ENCODE measurements at regions of chr15 and their contacts with region 1.

Region 1: DNA sequence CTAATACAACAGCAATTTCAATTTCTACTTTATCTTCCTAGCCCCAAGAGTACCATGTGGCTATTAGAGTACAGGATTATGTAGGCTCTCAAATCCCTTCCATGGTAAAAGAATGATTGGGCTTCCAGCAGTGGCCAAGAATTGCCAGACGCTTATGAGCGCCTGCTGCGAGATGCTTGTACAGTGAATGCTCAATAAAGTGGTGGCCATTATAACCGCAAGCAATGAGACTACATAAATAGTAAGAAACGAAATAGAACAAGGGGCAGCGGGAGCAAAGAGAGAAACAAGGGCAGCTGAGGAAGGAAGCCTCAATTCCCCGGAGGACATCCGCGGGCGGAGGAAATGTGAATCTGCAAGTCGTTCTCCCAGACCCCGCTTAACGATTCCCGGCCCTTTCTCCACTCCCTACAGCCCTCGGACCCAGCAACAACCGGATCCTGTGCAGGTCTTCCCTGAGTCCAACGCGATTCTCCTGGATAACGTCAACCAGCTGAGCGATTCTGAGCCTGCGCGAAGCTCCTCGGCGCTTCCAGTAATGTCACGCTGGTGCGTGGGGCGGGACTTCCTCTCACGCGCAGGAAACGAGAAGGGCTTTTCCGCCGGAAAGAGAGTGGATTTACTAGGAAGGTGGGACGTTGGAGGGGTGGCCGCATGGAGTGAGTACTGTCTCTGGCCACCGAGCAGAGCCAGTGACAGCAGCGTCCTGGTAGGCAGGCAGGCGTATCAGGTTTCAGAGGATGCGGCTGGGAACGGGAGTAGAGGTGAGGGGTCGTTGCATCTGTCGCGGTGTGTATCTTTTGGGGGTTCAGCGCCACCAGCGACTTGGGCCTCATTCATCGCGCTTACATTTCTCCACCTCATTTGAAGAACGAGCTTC is 40.5 kb upstream of the AP3B2 start:
- DNase-seq: peak; percentile 93
- H3K4me3 ChIP-seq: peak overlapping the region; percentile 67 to 99 (median 74)
- H3K27ac ChIP-seq: peak overlapping the region; percentile 64
- H3K4me1 ChIP-seq: peaks cover 15% of the 10 kb centered on the region
- H3K27me3 ChIP-seq: no peaks in the 10 kb centered on the region
- CTCF ChIP-seq: no peak

Region 2: DNA sequence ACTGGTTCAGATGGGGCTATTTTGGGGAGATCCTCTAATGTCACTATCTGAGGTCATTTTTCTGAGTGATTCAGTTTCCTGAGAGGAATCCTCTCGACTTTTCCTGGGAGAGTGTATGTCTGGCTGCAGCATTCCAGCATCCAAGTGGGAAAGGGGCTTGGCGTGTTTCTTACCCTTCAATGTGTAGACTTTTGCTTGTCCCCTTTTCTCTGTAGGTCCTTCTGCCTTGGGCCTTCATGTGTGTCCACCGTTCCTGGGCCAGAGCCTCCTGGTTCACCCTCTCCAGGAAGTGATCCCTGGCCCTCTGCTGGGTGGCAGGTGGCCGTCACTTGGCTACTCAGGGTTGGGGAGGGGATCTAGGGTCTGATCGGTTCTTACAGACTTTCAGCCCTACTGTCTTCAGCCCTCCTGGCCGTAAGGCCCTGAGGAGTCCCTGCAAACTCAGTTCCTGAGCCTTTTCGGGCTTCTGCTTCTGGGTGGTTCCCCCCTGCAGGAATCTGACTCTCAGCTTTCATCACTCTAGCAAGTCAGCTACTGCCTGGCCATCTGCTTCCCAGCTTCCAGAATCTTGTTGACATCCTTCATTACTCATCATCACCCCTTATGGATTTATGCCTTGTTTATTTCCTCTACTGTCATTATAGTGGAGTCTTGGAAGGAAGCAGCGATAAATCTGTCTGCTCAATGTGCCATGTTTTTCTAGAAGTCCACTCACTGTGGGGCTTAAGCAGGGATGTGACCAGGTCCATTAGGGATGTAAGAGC is 437.4 kb before region 1 on chr15:
- CTCF ChIA-PET with region 1: no interaction called
- dilution Hi-C with region 1: no loop called
- in situ Hi-C with region 1: no loop called
- intact Hi-C with region 1: no loop called
- DNase-seq: no peak
- H3K4me3 ChIP-seq: no peak overlapping the region
- H3K27ac ChIP-seq: no peak overlapping the region
- H3K4me1 ChIP-seq: no peaks in the 10 kb centered on the region
- H3K27me3 ChIP-seq: peaks cover 2% of the 10 kb centered on the region
- CTCF ChIP-seq: no peak

Region 3: DNA sequence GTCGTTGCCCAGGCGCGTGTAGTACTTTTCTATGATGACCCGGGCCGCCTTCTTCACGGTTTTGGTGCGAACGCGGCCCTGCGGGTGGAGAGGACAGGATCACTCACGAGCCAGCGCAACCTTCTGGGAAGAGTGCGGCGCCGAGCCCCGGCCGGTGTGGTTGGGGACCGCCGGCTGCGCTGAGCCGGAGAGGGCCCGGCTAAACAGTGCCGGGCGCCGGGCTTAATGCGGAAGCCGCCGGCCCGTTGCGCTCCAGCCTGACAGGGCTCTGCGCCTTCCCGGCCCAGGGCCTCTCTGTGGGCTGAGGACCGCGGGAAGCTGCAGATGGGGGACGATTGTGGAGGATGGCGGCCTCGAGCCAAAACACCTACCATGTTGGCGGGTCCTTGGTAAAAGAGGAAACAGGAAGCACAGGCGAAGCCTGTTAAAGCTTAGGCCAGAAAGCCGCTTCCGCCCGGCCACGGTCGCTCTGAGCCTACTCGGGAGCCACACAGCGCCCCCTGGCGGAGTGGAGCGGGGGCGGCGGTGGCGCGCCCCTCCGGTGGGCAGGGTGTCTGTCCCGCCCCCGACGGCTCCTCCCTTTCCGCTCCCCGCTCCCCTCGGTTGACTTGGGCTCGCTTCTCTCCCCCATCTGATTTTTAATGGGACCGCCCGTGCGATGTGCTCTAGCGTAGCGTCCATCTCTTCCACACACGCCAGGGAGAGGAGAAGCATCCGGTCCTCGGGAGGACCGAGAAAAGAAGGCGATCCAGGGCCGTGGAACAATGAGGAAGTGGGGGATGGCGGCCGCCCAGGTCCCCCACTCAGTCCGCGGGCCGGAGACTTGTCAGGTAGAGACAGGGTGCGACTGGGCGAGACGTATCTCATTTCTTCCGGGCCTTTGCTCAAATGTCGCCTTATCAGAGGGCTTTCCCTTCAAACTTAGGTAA is 209.9 kb before region 1 on chr15 and contains the start of gene RPS17:
- CTCF ChIA-PET with region 1: no interaction called
- dilution Hi-C with region 1: no loop called
- in situ Hi-C with region 1: no loop called
- intact Hi-C with region 1: loop called (anchors 1 kb)
- DNase-seq: peak; percentile 96
- H3K4me3 ChIP-seq: peak within 1 kb of the TSS; percentile 83 to 92 (median 92)
- H3K27ac ChIP-seq: peak within 1 kb of the TSS; percentile 73
- H3K4me1 ChIP-seq: peaks cover 21% of the 10 kb centered on the region
- H3K27me3 ChIP-seq: no peaks in the 10 kb centered on the region
- CTCF ChIP-seq: peak; percentile 78 to 98
- total RNA-seq, gene RPS17: 1,069 to 1,616 TPM

Region 4: GRCh38 chr15:82709421-82710207 is 40.6 kb before region 1 on chr15 and contains the start of gene AP3B2:
- CTCF ChIA-PET with region 1: interaction called, 3 read pairs
- dilution Hi-C with region 1: no loop called
- in situ Hi-C with region 1: no loop called
- intact Hi-C with region 1: loop called (anchors 1 kb)
- DNase-seq: peak; percentile 69
- H3K4me3 ChIP-seq: peak within 1 kb of the TSS; percentile 88 to 96 (median 89)
- H3K27ac ChIP-seq: no peak within 1 kb of the TSS
- H3K4me1 ChIP-seq: peaks cover 7% of the 10 kb centered on the region
- H3K27me3 ChIP-seq: no peaks in the 10 kb centered on the region
- CTCF ChIP-seq: no peak
- total RNA-seq, gene AP3B2: 5.5 to 12.3 TPM

Region 5: GRCh38 chr15:82730022-82730530 is 20.1 kb before region 1 on chr15:
- CTCF ChIA-PET with region 1: no interaction called
- dilution Hi-C with region 1: no loop called
- in situ Hi-C with region 1: no loop called
- intact Hi-C with region 1: no loop called
- DNase-seq: no peak
- H3K4me3 ChIP-seq: no peak overlapping the region
- H3K27ac ChIP-seq: no peak overlapping the region
- H3K4me1 ChIP-seq: no peaks in the 10 kb centered on the region
- H3K27me3 ChIP-seq: no peaks in the 10 kb centered on the region
- CTCF ChIP-seq: no peak

Region 6: DNA sequence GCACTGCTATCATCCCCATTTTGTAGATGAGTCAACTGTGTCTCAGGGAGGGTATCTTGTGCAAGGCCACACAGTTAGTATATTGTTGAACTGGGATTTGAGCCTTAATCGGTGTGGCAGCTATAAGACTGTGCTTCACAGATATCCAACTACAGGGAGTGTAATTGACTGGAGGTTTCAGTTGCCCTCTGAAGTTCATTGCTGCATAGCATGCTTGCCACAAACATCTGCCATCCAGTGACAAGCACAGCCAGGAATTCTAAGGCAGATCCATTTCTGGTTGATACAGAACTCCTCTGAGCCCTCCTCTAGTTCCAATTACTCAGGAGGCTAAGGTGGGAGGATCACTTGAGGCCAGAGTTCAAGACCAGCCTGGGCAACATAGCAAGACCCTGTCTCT is 39.3 kb after region 1 on chr15:
- CTCF ChIA-PET with region 1: no interaction called
- dilution Hi-C with region 1: no loop called
- in situ Hi-C with region 1: no loop called
- intact Hi-C with region 1: no loop called
- DNase-seq: peak; percentile 12
- H3K4me3 ChIP-seq: no peak overlapping the region
- H3K27ac ChIP-seq: no peak overlapping the region
- H3K4me1 ChIP-seq: peaks cover 16% of the 10 kb centered on the region
- H3K27me3 ChIP-seq: no peaks in the 10 kb centered on the region
- CTCF ChIP-seq: no peak

Region 7: GRCh38 chr15:82832601-82833361 is 82.6 kb after region 1 on chr15:
- CTCF ChIA-PET with region 1: no interaction called
- dilution Hi-C with region 1: no loop called
- in situ Hi-C with region 1: no loop called
- intact Hi-C with region 1: loop called (anchors 5 kb)
- DNase-seq: peak; percentile 94
- H3K4me3 ChIP-seq: no peak overlapping the region
- H3K27ac ChIP-seq: peak overlapping the region; percentile 84
- H3K4me1 ChIP-seq: peaks cover 25% of the 10 kb centered on the region
- H3K27me3 ChIP-seq: no peaks in the 10 kb centered on the region
- CTCF ChIP-seq: peak in 1 of 2 donors; percentile 21

Region 8: DNA sequence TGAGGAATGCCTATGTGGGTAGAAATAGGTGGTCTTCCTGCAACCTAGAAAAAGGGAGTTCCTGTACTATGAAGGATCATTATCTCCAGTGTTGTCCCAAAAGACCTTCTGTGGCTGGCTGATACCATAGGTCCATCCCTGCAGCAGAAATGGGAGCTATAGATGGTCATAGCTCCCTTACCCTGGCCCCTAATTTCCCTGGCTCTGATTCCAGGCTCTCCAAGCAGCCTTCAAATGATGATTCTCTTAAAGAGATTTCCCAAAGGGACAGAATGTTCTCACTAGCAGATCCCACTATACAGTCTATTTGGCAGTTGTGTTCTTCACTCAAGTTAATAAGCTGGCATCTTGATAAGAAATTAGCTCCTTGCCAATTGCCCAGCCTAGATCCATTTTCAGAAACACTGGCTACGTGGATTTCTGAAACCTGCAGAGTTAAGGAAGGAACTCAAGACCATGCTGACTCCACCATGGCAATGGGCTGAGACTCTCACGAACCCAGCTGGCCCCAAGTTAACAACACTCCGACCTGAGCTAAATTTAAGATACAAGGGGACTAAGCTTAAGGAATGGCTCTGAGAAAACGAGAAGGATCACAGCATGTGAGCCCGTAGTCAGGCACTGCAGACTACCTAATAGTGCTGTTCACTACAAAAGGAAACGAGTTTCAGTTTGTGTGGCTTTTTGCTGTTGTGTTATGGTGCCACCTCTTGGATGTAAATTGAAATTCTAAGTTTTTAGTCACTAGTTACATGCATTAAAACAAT is 249.9 kb after region 1 on chr15:
- CTCF ChIA-PET with region 1: no interaction called
- dilution Hi-C with region 1: no loop called
- in situ Hi-C with region 1: no loop called
- intact Hi-C with region 1: loop called (anchors 10 kb)
- DNase-seq: peak; percentile 63
- H3K4me3 ChIP-seq: peak overlapping the region; percentile 15 to 39 (median 38)
- H3K27ac ChIP-seq: no peak overlapping the region
- H3K4me1 ChIP-seq: peaks cover 4% of the 10 kb centered on the region
- H3K27me3 ChIP-seq: no peaks in the 10 kb centered on the region
- CTCF ChIP-seq: peak; percentile 49 to 64

Measured in mammary epithelial cell (primary cell).